H1 (cell line): ENCODE measurements at regions of chr19 and their contacts with region 1.

Region 1: GRCh38 chr19:47600246-47601179 is 8.4 kb upstream of the BICRA start:
- DNase-seq: peak; percentile 99
- H3K4me3 ChIP-seq: peak overlapping the region; percentile 61 to 71 (median 65)
- H3K27ac ChIP-seq: peak overlapping the region; percentile 50; the same call in 1 of the 2 replicates
- H3K4me1 ChIP-seq: peaks cover 0 to 6% (median 4%) of the 10 kb centered on the region in 4 experiments; a peak in 6 of 7 replicates
- H3K27me3 ChIP-seq: no peaks in the 10 kb centered on the region
- CTCF ChIP-seq: no peak
- EP300 ChIP-seq: no peak; a peak in 1 of 3 replicates
- POLR2A ChIP-seq: peak in 1 of 2 experiments; percentile 92; a peak in 2 of 3 replicates
- RAD21 ChIP-seq: peak in 1 of 2 experiments; percentile 18; a peak in 1 of 4 replicates

Region 2: GRCh38 chr19:47587295-47587694 is 13.2 kb before region 1 on chr19:
- CTCF ChIA-PET with region 1: no interaction called
- POLR2A ChIA-PET with region 1: interaction called, 18 read pairs
- DNase-seq: no peak
- H3K4me3 ChIP-seq: no peak overlapping the region
- H3K27ac ChIP-seq: no peak overlapping the region
- H3K4me1 ChIP-seq: no peaks in the 10 kb centered on the region
- H3K27me3 ChIP-seq: no peaks in the 10 kb centered on the region
- CTCF ChIP-seq: no peak
- EP300 ChIP-seq: no peak
- POLR2A ChIP-seq: no peak
- RAD21 ChIP-seq: no peak

Region 3: DNA sequence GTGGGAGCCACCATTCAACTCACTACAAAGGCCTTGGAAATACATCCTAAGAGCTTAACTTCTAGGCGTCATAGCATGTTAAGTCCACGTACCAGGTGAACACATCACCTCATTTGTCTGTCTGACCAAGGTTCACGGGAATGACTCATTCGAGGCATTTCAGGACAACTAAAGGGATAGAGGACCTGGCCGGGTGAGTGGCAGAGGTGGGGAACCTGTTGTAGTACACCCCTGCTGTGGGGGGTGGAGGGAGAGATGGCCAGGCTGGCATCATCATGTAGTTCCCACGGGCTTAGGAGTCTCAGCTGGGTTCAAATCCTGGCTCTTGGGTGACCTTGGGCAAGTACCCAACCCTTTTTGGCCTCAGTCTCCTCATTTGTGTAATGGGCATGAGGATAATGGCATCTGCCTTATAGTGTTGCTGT is 60.0 kb after region 1 on chr19:
- CTCF ChIA-PET with region 1: no interaction called
- POLR2A ChIA-PET with region 1: no interaction called
- DNase-seq: no peak
- H3K4me3 ChIP-seq: no peak overlapping the region
- H3K27ac ChIP-seq: no peak overlapping the region
- H3K4me1 ChIP-seq: peaks cover 0 to 2% (median 0%) of the 10 kb centered on the region in 4 experiments; a peak in 1 of 7 replicates
- H3K27me3 ChIP-seq: no peaks in the 10 kb centered on the region
- CTCF ChIP-seq: no peak
- EP300 ChIP-seq: no peak
- POLR2A ChIP-seq: no peak
- RAD21 ChIP-seq: no peak